Activated CD8-positive, alpha-beta memory T cell treated with anti-CD3 and anti-CD28 coated beads, Interleukin-2, amount 10 ng/mL, durations not matched to agents 7 days and 5 days (primary cell): ENCODE measurements at regions of chr19 and their contacts with region 1.

Region 1: DNA sequence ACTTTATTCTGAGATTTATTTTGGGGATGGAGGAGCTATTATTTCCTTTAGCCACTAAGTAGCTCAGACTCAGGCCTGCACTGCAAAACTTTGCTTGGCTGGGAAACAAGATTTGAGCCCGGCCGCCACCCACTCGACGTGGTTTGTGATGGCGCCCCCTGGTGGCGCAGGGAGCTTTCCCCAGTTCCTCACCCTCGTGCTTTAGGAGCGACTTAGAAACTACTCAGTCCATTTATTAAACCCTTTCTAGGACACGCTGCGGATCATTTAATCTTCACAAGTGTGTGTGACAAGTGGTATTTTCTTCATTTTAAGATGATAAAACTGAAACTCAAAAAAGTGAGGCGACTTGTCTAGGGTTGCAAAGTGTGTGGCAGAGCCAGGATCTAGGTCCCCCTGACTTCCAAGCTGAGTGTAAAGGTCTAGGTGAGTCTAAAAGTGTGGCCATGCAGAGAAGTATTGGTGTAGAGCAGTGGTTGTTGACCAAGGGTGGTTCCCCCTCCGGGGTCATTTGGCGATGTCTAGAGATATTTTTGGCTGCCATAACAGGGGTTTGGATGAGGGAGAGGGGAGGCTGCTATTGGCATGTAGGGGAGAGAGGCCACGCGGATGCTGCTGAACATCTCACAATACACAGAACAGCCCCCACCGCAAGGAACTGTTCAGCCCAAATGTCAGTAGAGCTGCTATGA is 2.2 kb downstream of the CXCL17 start:
- DNase-seq: peak; percentile 86
- ATAC-seq: peak; percentile 69
- H3K4me3 Mint-ChIP-seq: peak overlapping the region; percentile 47
- H3K27ac Mint-ChIP-seq: peak overlapping the region; percentile 73
- H3K4me1 Mint-ChIP-seq: peaks cover 35% of the 10 kb centered on the region
- H3K27me3 Mint-ChIP-seq: no peaks in the 10 kb centered on the region

Region 2: GRCh38 chr19:42396381-42397262 is 43.9 kb before region 1 on chr19:
- CTCF ChIA-PET with region 1: interaction called, 29 read pairs
- DNase-seq: peak; percentile 99
- ATAC-seq: peak; percentile 99
- H3K4me3 Mint-ChIP-seq: peak overlapping the region; percentile 81
- H3K27ac Mint-ChIP-seq: peak overlapping the region; percentile 90
- H3K4me1 Mint-ChIP-seq: peaks cover 29% of the 10 kb centered on the region
- H3K27me3 Mint-ChIP-seq: peaks cover 10% of the 10 kb centered on the region

Region 3: DNA sequence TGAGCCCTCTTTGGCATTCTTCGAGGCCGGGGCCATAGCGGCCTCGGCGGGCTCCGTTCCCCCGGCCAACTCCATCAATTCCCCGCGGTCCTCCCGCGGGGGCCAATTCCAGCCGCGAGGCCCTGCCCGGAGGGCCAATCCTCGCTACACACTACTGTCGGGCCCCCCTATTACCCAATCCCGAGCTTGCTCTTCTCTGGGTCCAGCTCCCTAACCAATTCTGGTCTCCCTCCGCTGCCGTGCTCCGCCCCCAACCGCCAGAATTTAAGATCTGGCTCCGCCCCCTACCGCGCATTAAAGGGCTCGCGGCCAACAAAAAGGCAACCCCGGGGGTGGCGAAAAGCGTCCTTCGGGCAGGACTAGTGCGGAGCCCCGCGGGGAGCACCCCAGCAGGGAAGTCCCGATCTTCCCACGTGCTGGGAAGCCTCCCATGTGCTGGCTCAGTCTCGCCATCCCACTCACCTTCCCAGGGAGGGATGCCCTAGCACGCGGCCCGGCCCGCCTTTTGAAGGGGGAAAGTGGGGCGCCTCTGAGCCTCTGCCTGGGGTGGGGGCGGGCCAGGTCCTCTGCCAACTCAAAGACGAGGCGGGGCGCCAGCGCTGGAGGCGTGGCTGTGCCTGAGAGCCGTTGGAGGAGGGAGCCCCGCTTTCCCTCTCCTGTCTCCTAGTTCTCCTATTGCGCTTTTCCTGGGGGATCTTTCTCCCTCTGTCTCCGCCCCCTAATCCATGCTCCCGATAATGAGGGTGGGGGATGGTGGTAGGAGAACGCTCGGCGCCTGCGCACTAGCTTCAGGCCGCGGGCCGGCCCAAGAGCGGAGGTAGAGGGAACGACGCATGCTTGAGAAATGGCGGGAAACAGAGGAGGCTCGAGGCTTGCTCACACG is 16.8 kb before region 1 on chr19:
- CTCF ChIA-PET with region 1: interaction called, 67 read pairs
- DNase-seq: peak; percentile 97
- ATAC-seq: peak; percentile 98
- H3K4me3 Mint-ChIP-seq: peak overlapping the region; percentile 94
- H3K27ac Mint-ChIP-seq: peak overlapping the region; percentile 90
- H3K4me1 Mint-ChIP-seq: peaks cover 37% of the 10 kb centered on the region
- H3K27me3 Mint-ChIP-seq: peaks cover 3% of the 10 kb centered on the region

Region 4: GRCh38 chr19:42468273-42468796 is 27.8 kb after region 1 on chr19:
- CTCF ChIA-PET with region 1: interaction called, 12 read pairs
- DNase-seq: no peak
- ATAC-seq: no peak
- H3K4me3 Mint-ChIP-seq: no peak overlapping the region
- H3K27ac Mint-ChIP-seq: no peak overlapping the region
- H3K4me1 Mint-ChIP-seq: peaks cover 37% of the 10 kb centered on the region
- H3K27me3 Mint-ChIP-seq: peaks cover 8% of the 10 kb centered on the region

Region 5: DNA sequence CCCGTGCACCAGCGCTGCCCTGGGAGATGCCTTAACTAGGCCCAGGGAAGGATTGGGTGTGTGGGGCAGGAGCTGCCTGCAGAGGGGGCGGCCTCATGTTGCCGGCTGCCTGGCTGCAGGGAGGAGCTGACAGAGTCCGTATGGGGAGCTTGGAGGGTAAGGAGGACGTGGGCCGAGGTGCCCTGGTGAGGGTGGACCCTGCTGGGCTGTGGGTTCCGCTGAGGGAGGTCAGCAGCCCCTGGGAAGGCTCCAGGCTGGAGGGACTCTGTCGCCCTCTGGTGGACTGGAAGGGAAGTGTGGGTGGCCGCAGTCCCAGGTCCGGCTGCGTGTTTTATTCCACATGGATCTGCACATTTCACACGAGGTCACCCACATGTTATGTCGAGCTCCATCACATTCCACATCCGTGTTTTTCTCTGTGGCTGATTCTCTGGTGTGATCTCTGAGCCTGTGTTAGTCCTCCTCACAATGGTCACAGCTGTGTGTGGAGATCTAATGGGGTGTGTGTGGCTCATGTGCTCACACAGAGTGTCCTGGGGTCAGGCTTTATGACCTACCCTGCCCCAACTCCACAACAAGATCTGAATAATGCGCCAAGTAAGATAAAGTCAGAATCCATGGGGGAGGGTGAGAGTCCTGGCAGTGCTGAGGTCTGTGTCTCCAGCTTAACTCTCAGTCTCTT is 156.0 kb after region 1 on chr19:
- CTCF ChIA-PET with region 1: interaction called, 10 read pairs
- DNase-seq: no peak
- ATAC-seq: peak; percentile 65
- H3K4me3 Mint-ChIP-seq: no peak overlapping the region
- H3K27ac Mint-ChIP-seq: no peak overlapping the region
- H3K4me1 Mint-ChIP-seq: no peaks in the 10 kb centered on the region
- H3K27me3 Mint-ChIP-seq: peaks cover 31% of the 10 kb centered on the region

Region 6: GRCh38 chr19:42683917-42684513 is 243.5 kb after region 1 on chr19:
- CTCF ChIA-PET with region 1: no interaction called
- DNase-seq: no peak
- ATAC-seq: no peak
- H3K4me3 Mint-ChIP-seq: no peak overlapping the region
- H3K27ac Mint-ChIP-seq: no peak overlapping the region
- H3K4me1 Mint-ChIP-seq: no peaks in the 10 kb centered on the region
- H3K27me3 Mint-ChIP-seq: no peaks in the 10 kb centered on the region